ENCODE measurements at regions of chr5 and their contacts with region 1.

Region 1: GRCh38 chr5:150544611-150545219 is 36.8 kb downstream of the NDST1 start:
- DNase-seq: peak; percentile 68 to 96
- ATAC-seq: peak; percentile 88 to 94
- H3K4me3 ChIP-seq: no peak overlapping the region
- H3K27ac ChIP-seq: peak overlapping the region in 1 of 2 experiments; percentile 27; a peak in 2 of 6 replicates
- H3K4me1 ChIP-seq: peaks cover 25% of the 10 kb centered on the region
- CTCF ChIP-seq: peak; percentile 82
- EP300 ChIP-seq: no peak
- POLR2A ChIP-seq: no peak
- RAD21 ChIP-seq: peak; percentile 77 to 78

Region 2: GRCh38 chr5:150511578-150512367 is 32.9 kb before region 1 on chr5:
- CTCF ChIA-PET with region 1: interaction called, 13 read pairs
- POLR2A ChIA-PET with region 1: no interaction called
- DNase-seq: peak; percentile 58 to 75
- ATAC-seq: peak; percentile 51 to 58
- H3K4me3 ChIP-seq: no peak overlapping the region
- H3K27ac ChIP-seq: peak overlapping the region; percentile 71 to 92
- H3K4me1 ChIP-seq: peaks cover 96% of the 10 kb centered on the region
- CTCF ChIP-seq: no peak
- EP300 ChIP-seq: no peak
- POLR2A ChIP-seq: no peak
- RAD21 ChIP-seq: no peak

Region 3: GRCh38 chr5:150529555-150529954 is 15.2 kb before region 1 on chr5:
- CTCF ChIA-PET with region 1: interaction called, 48 read pairs
- POLR2A ChIA-PET with region 1: no interaction called
- DNase-seq: no peak
- ATAC-seq: no peak
- H3K4me3 ChIP-seq: no peak overlapping the region
- H3K27ac ChIP-seq: no peak overlapping the region
- H3K4me1 ChIP-seq: peaks cover 4% of the 10 kb centered on the region; the same call in 1 of the 3 replicates
- CTCF ChIP-seq: no peak
- EP300 ChIP-seq: no peak
- POLR2A ChIP-seq: no peak
- RAD21 ChIP-seq: no peak

Region 4: GRCh38 chr5:150656191-150657132 is 111.7 kb after region 1 on chr5:
- CTCF ChIA-PET with region 1: interaction called, 14 read pairs
- POLR2A ChIA-PET with region 1: no interaction called
- DNase-seq: peak; percentile 60 to 81
- ATAC-seq: peak; percentile 48 to 66
- H3K4me3 ChIP-seq: peak overlapping the region; percentile 50
- H3K27ac ChIP-seq: peak overlapping the region; percentile 83 to 96
- H3K4me1 ChIP-seq: peaks cover 43% of the 10 kb centered on the region
- CTCF ChIP-seq: peak; percentile 90
- EP300 ChIP-seq: no peak
- POLR2A ChIP-seq: peak; percentile 50
- RAD21 ChIP-seq: peak; percentile 71 to 98